Right cardiac atrium (tissue), 5 donors: ENCODE measurements at regions of chr12 and their contacts with region 1.

Region 1: DNA sequence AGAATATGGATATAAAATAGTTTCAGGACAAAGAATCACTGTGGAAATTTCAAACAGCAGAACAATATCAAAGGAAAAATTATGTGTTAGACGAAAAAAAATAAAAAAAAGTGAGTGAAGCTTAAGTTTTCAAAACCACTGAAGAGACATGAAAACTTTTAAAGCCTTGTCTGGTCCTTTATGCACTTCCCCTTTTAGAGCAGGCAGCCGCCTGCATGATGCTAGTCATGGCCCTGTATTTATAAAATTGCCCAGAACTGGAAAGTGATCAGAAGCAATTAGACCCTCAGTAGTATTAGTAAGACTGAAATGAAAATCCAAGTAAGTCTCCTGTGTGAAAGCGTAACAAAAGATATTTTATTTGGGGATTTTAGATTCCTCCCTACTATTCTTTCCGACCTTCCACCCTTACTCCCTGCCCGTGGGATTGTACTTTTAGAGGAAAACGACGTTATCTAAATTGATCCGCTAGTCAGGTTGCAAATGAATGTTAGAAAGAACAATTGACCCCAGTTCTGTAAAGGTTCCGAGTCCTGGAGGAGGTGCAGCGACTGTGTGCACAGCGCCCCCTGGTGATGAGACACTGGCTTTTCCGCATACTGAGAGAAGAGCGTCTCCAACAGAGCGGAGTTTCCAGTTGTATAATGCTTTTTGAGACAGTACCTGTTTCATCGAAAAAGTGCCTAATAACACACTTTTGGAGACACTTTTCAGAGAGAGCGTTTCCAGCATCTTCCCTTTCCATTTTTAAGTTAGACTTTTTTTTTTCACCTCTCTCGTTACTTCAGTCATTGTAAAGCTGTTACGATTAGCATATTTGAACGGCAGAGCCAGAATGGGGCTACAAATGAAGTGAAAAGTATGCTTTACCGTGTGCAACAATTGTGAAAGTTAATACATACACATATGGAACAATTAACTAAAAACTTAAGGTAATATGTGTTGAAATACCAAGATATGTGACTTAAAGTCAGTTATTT is 12.4 kb downstream of the MGST1 start:
- DNase-seq: peak; percentile 62 to 86 (median 76)
- ATAC-seq: peak; percentile 71
- H3K4me3 ChIP-seq: no peak overlapping the region
- H3K27ac ChIP-seq: no peak overlapping the region
- H3K4me1 ChIP-seq: no peaks in the 10 kb centered on the region
- H3K27me3 ChIP-seq: no peaks in the 10 kb centered on the region

Region 2: GRCh38 chr12:16155940-16156339 is 203.9 kb before region 1 on chr12:
- intact Hi-C with region 1: no loop called
- DNase-seq: no peak
- ATAC-seq: no peak
- H3K4me3 ChIP-seq: no peak overlapping the region
- H3K27ac ChIP-seq: no peak overlapping the region
- H3K4me1 ChIP-seq: no peaks in the 10 kb centered on the region
- H3K27me3 ChIP-seq: no peaks in the 10 kb centered on the region

Region 3: GRCh38 chr12:16184681-16185080 is 175.1 kb before region 1 on chr12:
- intact Hi-C with region 1: loop called in 1 of 4 experiments (anchors 5 kb)
- DNase-seq: no peak
- ATAC-seq: no peak
- H3K4me3 ChIP-seq: no peak overlapping the region
- H3K27ac ChIP-seq: no peak overlapping the region
- H3K4me1 ChIP-seq: no peaks in the 10 kb centered on the region
- H3K27me3 ChIP-seq: no peaks in the 10 kb centered on the region